AG04450 (cell line): ENCODE measurements at regions of chr7 and their contacts with region 1.

Region 1: GRCh38 chr7:121547544-121548092 is 151.5 kb upstream of the FAM3C start:
- DNase-seq: peak; percentile 29
- H3K4me3 ChIP-seq: no peak overlapping the region
- H3K27ac ChIP-seq: no peak overlapping the region
- H3K27me3 ChIP-seq: no peaks in the 10 kb centered on the region
- CTCF ChIP-seq: peak; percentile 79

Region 2: DNA sequence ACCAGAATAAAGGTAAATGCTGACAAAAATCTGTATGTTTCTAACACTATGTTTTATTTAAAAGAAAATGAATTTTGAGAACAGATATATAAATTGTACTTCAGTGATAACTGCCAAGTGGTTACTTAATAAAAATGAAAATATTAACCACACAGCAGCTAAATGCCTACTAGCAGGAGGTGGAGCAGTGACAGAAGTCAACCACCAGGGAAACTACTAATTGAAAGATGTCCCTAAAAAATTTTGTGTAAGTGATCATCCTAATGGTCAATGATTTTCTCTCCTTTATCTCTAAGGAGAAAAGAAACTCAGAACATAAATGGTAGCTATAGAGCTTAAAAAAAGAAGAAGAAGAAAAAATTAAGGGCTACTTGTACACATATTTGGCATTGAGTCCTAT is 195.9 kb before region 1 on chr7:
- CTCF ChIA-PET with region 1: interaction called, 10 read pairs
- POLR2A ChIA-PET with region 1: no interaction called
- DNase-seq: no peak
- H3K4me3 ChIP-seq: no peak overlapping the region
- H3K27ac ChIP-seq: no peak overlapping the region
- H3K27me3 ChIP-seq: no peaks in the 10 kb centered on the region
- CTCF ChIP-seq: no peak

Region 3: DNA sequence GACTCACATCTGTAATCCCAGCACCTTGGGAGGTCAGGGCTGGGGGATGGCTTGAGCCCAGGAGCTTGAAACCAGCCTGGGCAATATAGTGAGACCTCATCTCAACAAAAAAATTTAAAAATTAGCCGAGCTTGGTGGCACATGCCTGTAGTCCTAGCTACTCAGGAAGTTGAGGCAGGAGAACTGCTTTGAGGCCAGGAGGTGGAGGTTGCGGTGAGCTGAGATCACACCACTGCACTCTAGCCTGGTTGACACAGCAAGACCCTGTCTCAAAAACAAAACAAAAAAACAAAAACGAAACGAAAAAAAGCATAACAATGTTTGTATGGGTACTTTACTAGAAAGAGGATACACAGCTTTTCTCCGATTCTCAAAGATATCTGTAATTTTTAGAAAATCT is 187.1 kb before region 1 on chr7:
- CTCF ChIA-PET with region 1: interaction called, 11 read pairs
- POLR2A ChIA-PET with region 1: no interaction called
- DNase-seq: no peak
- H3K4me3 ChIP-seq: no peak overlapping the region
- H3K27ac ChIP-seq: no peak overlapping the region
- H3K27me3 ChIP-seq: no peaks in the 10 kb centered on the region
- CTCF ChIP-seq: no peak

Region 4: DNA sequence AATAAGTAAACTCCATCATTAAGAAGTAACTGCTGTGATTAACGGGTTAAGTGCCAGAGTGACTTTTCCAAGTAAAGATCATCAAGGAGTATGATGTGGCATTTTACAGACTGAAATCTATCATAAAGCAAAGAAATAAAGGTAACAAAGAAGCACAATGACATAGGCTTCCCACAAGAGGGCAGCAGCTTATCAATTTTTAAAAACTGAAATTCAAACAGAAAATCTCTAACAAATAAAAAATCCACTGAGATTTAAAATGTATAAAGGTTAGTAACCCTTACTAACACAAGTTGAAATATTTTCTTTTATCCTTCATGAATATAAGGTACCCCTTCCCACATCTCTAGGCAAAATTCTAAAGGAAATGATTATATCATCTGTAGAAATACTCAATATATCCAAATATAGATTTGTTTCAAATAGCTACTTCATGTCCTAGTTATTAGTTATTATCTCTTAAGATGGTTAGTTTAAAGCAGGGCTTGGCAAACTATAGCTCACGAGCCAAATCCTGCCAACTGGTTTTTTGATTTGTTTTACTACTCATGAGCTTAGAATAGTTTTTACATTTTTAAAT is 180.7 kb before region 1 on chr7:
- CTCF ChIA-PET with region 1: interaction called, 147 read pairs
- POLR2A ChIA-PET with region 1: no interaction called
- DNase-seq: peak; percentile 10
- H3K4me3 ChIP-seq: no peak overlapping the region
- H3K27ac ChIP-seq: no peak overlapping the region
- H3K27me3 ChIP-seq: no peaks in the 10 kb centered on the region
- CTCF ChIP-seq: peak; percentile 74

Region 5: DNA sequence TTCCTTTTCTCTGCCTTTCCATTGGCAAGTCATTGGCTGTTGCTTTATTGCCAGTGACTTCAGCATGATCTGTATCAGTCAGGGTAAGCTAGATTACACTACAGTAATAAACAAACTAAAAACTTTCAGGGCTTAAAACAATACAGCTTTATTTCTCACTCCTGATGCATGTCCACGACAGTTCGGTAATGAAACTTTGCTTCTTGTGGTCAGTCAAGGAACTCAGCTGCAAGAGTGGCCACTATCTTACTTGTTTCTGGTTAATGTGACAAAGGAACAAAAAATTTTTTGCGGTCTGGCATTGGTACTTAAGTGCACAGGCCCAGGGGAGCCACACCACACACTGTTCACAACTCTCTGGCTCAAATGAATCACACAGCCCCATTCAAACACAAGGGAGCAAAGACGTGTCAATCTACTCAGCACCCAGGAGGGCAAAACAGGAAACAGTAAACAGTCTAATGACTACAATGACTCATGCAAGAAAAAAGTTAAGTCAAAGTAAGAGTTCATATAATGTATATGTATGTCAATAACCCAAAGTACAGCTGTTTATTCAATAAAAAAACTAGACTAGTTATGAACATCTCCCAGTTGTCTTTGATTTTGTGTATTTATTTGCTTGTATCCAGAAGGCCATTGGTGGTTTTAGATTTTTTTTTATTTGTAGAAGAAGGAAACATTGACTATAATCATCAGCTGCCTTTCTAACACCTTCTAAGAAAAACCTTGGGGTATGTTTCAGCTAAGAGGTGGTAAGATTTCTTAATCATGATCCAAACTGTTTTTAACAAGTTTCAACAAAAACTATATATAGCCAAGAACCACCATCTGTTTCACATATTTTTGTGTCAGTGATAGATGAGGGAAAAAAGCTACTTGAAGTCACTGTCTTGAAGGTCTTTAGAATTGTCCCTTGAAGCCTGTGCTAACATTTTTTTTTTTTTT is 17.1 kb before region 1 on chr7:
- CTCF ChIA-PET with region 1: interaction called, 16 read pairs
- POLR2A ChIA-PET with region 1: no interaction called
- DNase-seq: no peak
- H3K4me3 ChIP-seq: no peak overlapping the region
- H3K27ac ChIP-seq: no peak overlapping the region
- H3K27me3 ChIP-seq: no peaks in the 10 kb centered on the region
- CTCF ChIP-seq: no peak